PC-9 (cell line): ENCODE measurements at regions of chr7 and their contacts with region 1.

Region 1: GRCh38 chr7:156156734-156157610 is 344.7 kb upstream of the SHH start:
- DNase-seq: peak in 1 of 2 experiments; percentile 17
- H3K4me3 ChIP-seq: no peak overlapping the region
- H3K27ac ChIP-seq: no peak overlapping the region
- H3K4me1 ChIP-seq: 0 out of 2 replicates have a peak, but pooled peaks cover 4% of the 10 kb centered on the region
- H3K27me3 ChIP-seq: peaks cover 11% of the 10 kb centered on the region
- CTCF ChIP-seq: peak; percentile 83

Region 2: DNA sequence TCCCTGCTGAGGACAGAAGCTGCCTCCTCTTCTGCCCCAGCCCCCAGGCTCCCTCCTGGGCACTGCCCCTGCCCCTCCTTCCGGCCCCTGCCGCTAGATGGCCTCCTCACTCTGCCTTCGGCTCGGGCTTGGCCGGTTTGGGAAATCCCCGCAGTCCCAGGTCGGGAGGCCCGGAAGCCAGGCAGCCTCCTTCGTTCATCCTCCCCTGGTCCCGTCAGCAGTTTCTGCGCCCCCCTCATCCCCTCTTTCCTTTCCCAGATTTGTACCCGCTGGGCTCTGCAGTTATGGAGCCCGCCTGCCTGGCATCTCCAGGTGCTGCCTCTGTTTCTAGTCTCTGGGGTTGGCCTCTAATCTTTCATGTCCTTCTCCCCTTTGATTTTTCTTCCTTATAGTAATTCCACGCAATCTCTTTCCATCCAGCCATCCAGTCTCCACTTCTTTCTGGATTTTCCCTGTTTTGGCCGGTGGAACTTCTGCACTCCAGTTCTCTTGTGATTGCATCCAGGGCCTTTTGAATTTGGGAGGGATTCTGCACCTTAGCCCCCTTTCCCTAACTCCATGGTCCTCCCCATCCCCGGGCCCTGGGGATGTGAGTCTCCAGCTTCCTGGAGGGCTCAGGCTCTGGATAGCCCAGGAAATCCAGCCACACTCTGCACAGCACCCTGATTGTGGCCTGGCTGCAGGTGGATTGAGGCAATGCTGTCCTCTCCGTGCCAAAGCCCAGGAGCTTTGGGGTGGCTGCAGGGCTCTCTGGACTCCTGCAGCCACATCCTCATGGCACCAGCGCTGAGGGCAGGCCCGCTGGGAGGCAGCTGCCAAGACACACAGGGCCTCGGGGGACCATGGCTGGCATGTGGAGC is 341.4 kb before region 1 on chr7:
- CTCF ChIA-PET with region 1: interaction called, 7 read pairs
- POLR2A ChIA-PET with region 1: no interaction called
- intact Hi-C with region 1: loop called (anchors 2 kb)
- DNase-seq: peak; percentile 49 to 80
- H3K4me3 ChIP-seq: peak overlapping the region; percentile 11; the same call in 1 of the 2 replicates
- H3K27ac ChIP-seq: no peak overlapping the region
- H3K4me1 ChIP-seq: peaks cover 39% of the 10 kb centered on the region
- H3K27me3 ChIP-seq: no peaks in the 10 kb centered on the region
- CTCF ChIP-seq: peak; percentile 90